Esophagus squamous epithelium (tissue), 5 donors: ENCODE measurements at regions of chr11 and their contacts with region 1.

Region 1: GRCh38 chr11:1050581-1051355 is 14.2 kb upstream of the MUC6 start:
- DNase-seq: no peak
- H3K4me3 ChIP-seq: peak overlapping the region in 1 of 4 donors; percentile 16
- H3K27ac ChIP-seq: no peak overlapping the region
- H3K4me1 ChIP-seq: peaks cover 6 to 41% (median 7%) of the 10 kb centered on the region in 3 donors
- H3K27me3 ChIP-seq: peaks cover 0 to 87% (median 3%) of the 10 kb centered on the region in 4 donors
- CTCF ChIP-seq: peak; percentile 70 to 99 (median 95)
- POLR2A ChIP-seq: no peak

Region 2: DNA sequence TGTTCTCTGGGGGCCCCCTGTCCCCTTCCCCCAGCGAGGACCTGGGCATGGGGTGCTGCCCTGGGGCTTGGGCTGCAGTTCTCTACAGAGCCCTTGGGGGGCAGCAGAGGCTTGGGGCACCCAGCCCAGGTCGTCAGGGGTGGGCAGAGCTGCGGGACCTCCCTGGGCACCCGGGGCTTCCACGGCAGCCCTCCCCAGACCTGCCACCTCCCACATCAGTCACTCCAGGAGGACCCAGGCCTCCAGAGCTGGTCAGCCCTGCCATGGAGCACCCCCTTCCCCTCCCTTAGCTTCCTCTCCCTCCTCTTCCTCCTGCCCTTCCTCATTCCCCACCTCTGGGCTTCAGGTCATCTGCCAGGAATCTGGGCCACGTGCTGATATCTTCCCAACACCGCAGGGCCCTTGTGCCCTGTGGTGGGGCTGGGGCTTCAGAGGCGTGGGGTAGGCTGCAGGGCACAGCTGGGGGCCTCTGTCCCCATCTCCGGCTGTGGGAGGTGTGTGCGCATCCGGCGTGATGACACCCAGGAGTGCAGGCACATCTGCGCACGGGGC is 202.3 kb before region 1 on chr11:
- intact Hi-C with region 1: loop called (anchors 5 kb)
- DNase-seq: no peak
- H3K4me3 ChIP-seq: peak overlapping the region in 2 of 4 donors; percentile 46 to 62
- H3K27ac ChIP-seq: no peak overlapping the region
- H3K4me1 ChIP-seq: peaks cover 38 to 81% (median 54%) of the 10 kb centered on the region in 3 donors
- H3K27me3 ChIP-seq: peaks cover 0 to 41% (median 3%) of the 10 kb centered on the region in 4 donors
- CTCF ChIP-seq: peak; percentile 61 to 91 (median 84)
- POLR2A ChIP-seq: no peak

Region 3: GRCh38 chr11:925496-926321 is 125.1 kb before region 1 on chr11 and contains the start of gene AP2A2:
- intact Hi-C with region 1: loop called (anchors 5 kb)
- DNase-seq: no peak
- H3K4me3 ChIP-seq: peak within 1 kb of the TSS; percentile 79 to 100 (median 88)
- H3K27ac ChIP-seq: peak within 1 kb of the TSS; percentile 88 to 97 (median 92)
- H3K4me1 ChIP-seq: peaks cover 13 to 56% (median 16%) of the 10 kb centered on the region in 3 donors
- H3K27me3 ChIP-seq: no peaks in the 10 kb centered on the region
- CTCF ChIP-seq: peak; percentile 48 to 97 (median 92)
- POLR2A ChIP-seq: peak in 3 of 4 donors; percentile 34 to 81 (median 80)
- total RNA-seq, gene AP2A2: 19.8 to 48.6 (median 28.5) TPM